Caco-2 (cell line): ENCODE measurements at regions of chr1 and their contacts with region 1.

Region 1: DNA sequence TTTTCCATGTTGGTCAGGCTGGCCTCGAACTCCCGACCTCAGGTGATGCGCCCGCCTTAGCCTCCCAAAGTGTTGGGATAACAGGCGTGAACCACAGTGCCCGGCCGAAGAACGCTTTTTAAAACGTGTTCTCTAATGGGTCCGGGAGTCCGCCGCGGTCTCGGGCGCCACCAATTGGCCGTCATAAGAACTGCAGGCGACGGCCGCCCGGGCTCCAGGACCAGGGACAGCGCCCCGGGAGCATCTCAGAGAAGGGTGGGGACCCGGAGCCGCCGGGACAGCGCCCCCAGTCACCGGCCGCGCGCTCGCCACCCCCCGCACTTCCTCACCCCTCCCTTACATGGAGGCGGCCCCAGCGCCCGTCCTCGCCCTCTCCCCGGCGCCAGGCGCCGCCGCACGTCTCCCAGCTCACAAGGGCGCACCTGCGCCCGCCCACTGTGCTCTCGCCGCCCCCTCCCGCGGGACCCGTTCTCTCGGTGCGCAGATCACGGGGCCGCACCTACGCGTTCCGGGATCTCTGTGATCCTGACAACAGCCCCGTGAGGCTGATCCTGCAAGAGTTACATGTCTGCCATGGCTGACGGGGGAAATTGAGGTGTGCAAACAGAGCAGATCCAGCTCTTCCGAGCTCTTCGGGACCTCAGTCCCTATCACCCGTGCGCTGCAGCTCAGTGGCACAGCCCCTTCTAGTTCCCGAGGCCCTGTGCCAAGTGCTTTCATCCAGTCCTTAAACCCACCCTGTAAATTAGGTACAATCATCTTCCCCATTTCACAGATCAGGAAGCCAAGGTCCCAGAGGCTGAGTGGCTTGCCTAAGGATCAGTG is 9.8 kb downstream of the RAP1GAP start:
- DNase-seq: peak; percentile 73 to 87
- H3K4me3 ChIP-seq: peak overlapping the region; percentile 42
- H3K4me3 Mint-ChIP-seq: peak overlapping the region; percentile 69
- H3K27ac Mint-ChIP-seq: no peak overlapping the region
- H3K4me1 ChIP-seq: no peaks in the 10 kb centered on the region
- H3K4me1 Mint-ChIP-seq: no peaks in the 10 kb centered on the region
- H3K27me3 ChIP-seq: no peaks in the 10 kb centered on the region
- H3K27me3 Mint-ChIP-seq: peaks cover 2% of the 10 kb centered on the region
- CTCF ChIP-seq: peak; percentile 94 to 96

Region 2: GRCh38 chr1:21189906-21190500 is 469.3 kb before region 1 on chr1:
- CTCF ChIA-PET with region 1: no interaction called
- POLR2A ChIA-PET with region 1: no interaction called
- intact Hi-C with region 1: no loop called
- DNase-seq: no peak
- H3K4me3 ChIP-seq: no peak overlapping the region
- H3K4me3 Mint-ChIP-seq: no peak overlapping the region
- H3K27ac Mint-ChIP-seq: no peak overlapping the region
- H3K4me1 ChIP-seq: no peaks in the 10 kb centered on the region
- H3K4me1 Mint-ChIP-seq: no peaks in the 10 kb centered on the region
- H3K27me3 ChIP-seq: no peaks in the 10 kb centered on the region
- H3K27me3 Mint-ChIP-seq: no peaks in the 10 kb centered on the region
- CTCF ChIP-seq: no peak

Region 3: GRCh38 chr1:21534674-21535378 is 124.5 kb before region 1 on chr1:
- CTCF ChIA-PET with region 1: no interaction called
- POLR2A ChIA-PET with region 1: no interaction called
- intact Hi-C with region 1: loop called (anchors 10 kb)
- DNase-seq: peak; percentile 54 to 64
- H3K4me3 ChIP-seq: no peak overlapping the region
- H3K4me3 Mint-ChIP-seq: no peak overlapping the region
- H3K27ac Mint-ChIP-seq: no peak overlapping the region
- H3K4me1 ChIP-seq: peaks cover 6% of the 10 kb centered on the region; the same call in 1 of the 2 replicates
- H3K4me1 Mint-ChIP-seq: peaks cover 5% of the 10 kb centered on the region
- H3K27me3 ChIP-seq: no peaks in the 10 kb centered on the region
- H3K27me3 Mint-ChIP-seq: peaks cover 3% of the 10 kb centered on the region
- CTCF ChIP-seq: peak; percentile 37 to 61

Region 4: DNA sequence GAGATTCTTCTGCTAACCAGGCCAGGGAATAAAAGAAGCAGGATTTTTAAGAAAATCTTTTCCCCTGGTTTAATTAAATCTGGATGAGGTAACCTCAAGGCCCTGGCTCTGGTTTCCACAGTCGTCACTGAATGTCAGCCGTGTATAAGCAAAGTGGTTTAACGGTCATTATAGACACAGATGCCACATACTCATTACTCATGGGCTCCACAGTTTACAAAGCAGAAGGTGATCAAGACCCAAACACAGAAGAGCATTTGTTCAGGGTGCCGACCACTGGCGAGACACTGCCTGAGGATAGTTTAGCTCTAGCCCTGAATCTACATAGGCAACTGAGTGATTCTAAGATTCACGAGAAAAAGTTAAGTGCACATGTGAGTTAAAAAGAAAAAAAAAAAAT is 37.6 kb after region 1 on chr1:
- CTCF ChIA-PET with region 1: no interaction called
- POLR2A ChIA-PET with region 1: no interaction called
- intact Hi-C with region 1: no loop called
- DNase-seq: no peak
- H3K4me3 ChIP-seq: no peak overlapping the region
- H3K4me3 Mint-ChIP-seq: no peak overlapping the region
- H3K27ac Mint-ChIP-seq: no peak overlapping the region
- H3K4me1 ChIP-seq: no peaks in the 10 kb centered on the region
- H3K4me1 Mint-ChIP-seq: no peaks in the 10 kb centered on the region
- H3K27me3 ChIP-seq: no peaks in the 10 kb centered on the region
- H3K27me3 Mint-ChIP-seq: no peaks in the 10 kb centered on the region
- CTCF ChIP-seq: no peak

Region 5: GRCh38 chr1:21742578-21742977 is 83.3 kb after region 1 on chr1:
- CTCF ChIA-PET with region 1: no interaction called
- POLR2A ChIA-PET with region 1: no interaction called
- intact Hi-C with region 1: no loop called
- DNase-seq: no peak
- H3K4me3 ChIP-seq: no peak overlapping the region
- H3K4me3 Mint-ChIP-seq: no peak overlapping the region
- H3K27ac Mint-ChIP-seq: no peak overlapping the region
- H3K4me1 ChIP-seq: no peaks in the 10 kb centered on the region
- H3K4me1 Mint-ChIP-seq: no peaks in the 10 kb centered on the region
- H3K27me3 ChIP-seq: no peaks in the 10 kb centered on the region
- H3K27me3 Mint-ChIP-seq: no peaks in the 10 kb centered on the region
- CTCF ChIP-seq: no peak